Cardiac septum (tissue), 1 donor: ENCODE measurements at regions of chr1 and their contacts with region 1.

Region 1: GRCh38 chr1:67766141-67766978 is 66.9 kb downstream of the GNG12 start:
- DNase-seq: no peak

Region 2: GRCh38 chr1:67710417-67710816 is 55.9 kb before region 1 on chr1:
- intact Hi-C with region 1: no loop called
- DNase-seq: no peak

Region 3: DNA sequence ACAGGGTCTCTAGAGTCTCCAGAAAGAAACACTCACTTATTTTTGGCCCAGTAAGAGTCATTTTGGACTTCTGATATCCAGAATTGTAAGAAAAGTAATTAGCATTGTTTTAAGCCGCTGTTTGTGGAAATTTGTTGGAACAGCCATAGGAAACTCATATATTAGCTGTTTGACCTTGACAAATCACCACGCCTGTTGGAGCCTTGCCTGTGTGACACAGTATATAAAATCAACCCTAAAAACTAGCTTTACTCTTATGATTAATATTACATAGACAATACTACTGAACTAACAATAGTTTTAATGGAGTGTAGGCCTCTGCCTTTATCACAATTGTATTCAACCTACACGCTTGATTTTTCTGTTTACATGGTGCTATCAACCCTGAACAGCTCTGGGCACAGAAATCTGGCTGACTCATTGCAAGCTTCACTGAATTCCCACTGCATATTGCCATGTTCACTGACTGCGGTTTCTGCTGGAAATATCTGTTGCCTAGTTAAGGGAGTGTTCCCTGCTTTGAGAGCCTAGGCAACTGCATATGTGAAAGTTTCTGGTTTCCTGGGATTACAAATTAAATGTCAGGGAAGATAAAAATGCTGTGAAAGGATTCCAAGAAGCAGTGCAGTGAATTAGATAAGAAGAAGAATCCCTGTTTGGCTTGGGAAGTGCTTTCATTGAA is 1150.0 kb after region 1 on chr1:
- intact Hi-C with region 1: loop called (anchors 5 kb)
- DNase-seq: no peak